ENCODE measurements at regions of chr12 and their contacts with region 1.

Region 1: DNA sequence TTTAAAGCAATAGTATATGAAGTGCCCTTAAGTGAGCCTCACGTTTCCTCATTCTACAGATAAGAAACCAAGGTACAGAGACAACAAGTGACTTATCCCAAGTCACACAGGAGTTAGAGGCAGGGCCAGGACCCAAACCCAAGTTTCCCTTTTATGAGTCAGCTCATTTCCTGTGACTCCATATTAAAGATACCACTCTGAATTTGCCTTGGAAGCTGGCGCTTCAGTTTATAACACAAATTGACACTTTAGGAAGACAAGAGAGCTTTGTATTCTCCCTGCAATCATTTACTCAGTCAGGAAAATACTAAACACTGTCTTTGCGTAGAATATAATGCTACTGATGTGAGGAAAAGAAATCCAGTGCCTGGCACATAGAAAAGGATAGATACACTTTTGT is 43.2 kb downstream of the MYBPC1 start:
- DNase-seq: peak; percentile 2
- H3K4me3 ChIP-seq: no peak overlapping the region
- H3K27ac ChIP-seq: no peak overlapping the region
- H3K4me1 ChIP-seq: peaks cover 6% of the 10 kb centered on the region
- H3K27me3 ChIP-seq: peaks cover 5 to 7% of the 10 kb centered on the region in 2 experiments
- CTCF ChIP-seq: no peak
- POLR2A ChIP-seq: no peak

Region 2: GRCh38 chr12:101619846-101620761 is 17.8 kb before region 1 on chr12:
- CTCF ChIA-PET with region 1: interaction called, 3 read pairs
- POLR2A ChIA-PET with region 1: no interaction called
- dilution Hi-C with region 1: no loop called
- intact Hi-C with region 1: loop called (anchors 2 kb)
- DNase-seq: no peak
- H3K4me3 ChIP-seq: no peak overlapping the region
- H3K27ac ChIP-seq: no peak overlapping the region
- H3K4me1 ChIP-seq: no peaks in the 10 kb centered on the region
- H3K27me3 ChIP-seq: peaks cover 0 to 2% of the 10 kb centered on the region in 2 experiments
- CTCF ChIP-seq: no peak
- POLR2A ChIP-seq: no peak

Region 3: DNA sequence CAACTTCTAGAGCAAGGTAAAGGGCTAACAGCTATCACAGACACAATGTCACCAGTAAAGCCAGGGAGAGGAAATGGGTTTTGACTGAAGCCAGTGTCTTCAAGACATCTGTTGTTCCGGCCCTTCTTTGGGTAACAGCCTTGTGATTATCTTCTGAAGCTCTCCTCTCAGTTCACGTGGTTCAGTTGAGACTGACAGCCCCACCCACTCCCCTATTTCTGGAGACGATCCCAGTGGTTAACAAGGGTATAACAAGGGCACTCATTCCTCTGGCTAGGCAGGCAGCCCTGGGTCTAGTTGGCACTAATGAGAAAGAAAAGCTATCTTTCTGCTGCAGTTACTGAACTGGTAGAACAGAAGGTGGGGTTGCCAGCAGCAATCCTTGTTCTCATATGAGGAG is 186.0 kb after region 1 on chr12:
- CTCF ChIA-PET with region 1: no interaction called
- POLR2A ChIA-PET with region 1: no interaction called
- dilution Hi-C with region 1: no loop called
- intact Hi-C with region 1: no loop called
- DNase-seq: peak; percentile 18
- H3K4me3 ChIP-seq: no peak overlapping the region
- H3K27ac ChIP-seq: no peak overlapping the region
- H3K4me1 ChIP-seq: peaks cover 5% of the 10 kb centered on the region
- H3K27me3 ChIP-seq: no peaks in the 10 kb centered on the region
- CTCF ChIP-seq: peak; percentile 10 to 13
- POLR2A ChIP-seq: no peak